ENCODE measurements at regions of chr7 and their contacts with region 1.

Region 1: DNA sequence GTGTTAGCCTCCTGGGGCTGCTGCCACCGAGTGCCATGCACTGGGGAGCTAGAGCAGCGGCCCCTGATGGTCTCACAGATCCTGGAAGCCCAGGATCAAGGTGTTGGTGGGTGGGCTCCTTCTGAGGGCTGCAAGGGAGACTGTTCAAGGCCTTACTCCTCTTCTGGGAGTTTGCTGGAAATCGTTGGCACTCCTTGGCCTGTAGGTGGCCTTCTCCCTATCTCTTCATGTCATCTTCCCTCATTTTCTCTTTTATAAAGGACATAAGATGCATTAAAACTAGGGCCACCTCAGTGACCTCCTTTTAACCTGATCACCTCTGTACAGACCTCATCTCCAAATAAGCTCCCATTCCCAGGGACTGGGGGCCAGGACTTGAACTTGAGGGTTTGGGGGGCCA is 27.0 kb upstream of the ZNF862 start:
- DNase-seq: no peak
- H3K4me3 ChIP-seq: no peak overlapping the region
- H3K27ac ChIP-seq: no peak overlapping the region
- H3K4me1 ChIP-seq: peaks cover 0 to 17% (median 5%) of the 10 kb centered on the region in 4 experiments; a peak in 6 of 7 replicates
- H3K27me3 ChIP-seq: no peaks in the 10 kb centered on the region
- CTCF ChIP-seq: peak in 2 of 3 experiments; percentile 25 to 51; a peak in 2 of 4 replicates
- EP300 ChIP-seq: no peak
- POLR2A ChIP-seq: no peak
- RAD21 ChIP-seq: no peak; a peak in 2 of 4 replicates

Region 2: GRCh38 chr7:149799397-149800171 is 11.6 kb before region 1 on chr7:
- CTCF ChIA-PET with region 1: interaction called, 55 read pairs
- POLR2A ChIA-PET with region 1: interaction called, 5 read pairs
- DNase-seq: peak in 1 of 2 experiments; percentile 91
- H3K4me3 ChIP-seq: no peak overlapping the region
- H3K27ac ChIP-seq: no peak overlapping the region
- H3K4me1 ChIP-seq: peaks cover 0 to 7% (median 5%) of the 10 kb centered on the region in 4 experiments; a peak in 6 of 7 replicates
- H3K27me3 ChIP-seq: no peaks in the 10 kb centered on the region
- CTCF ChIP-seq: peak in 2 of 3 experiments; percentile 73 to 89; a peak in 3 of 4 replicates
- EP300 ChIP-seq: no peak
- POLR2A ChIP-seq: no peak
- RAD21 ChIP-seq: peak; percentile 67 to 80

Region 3: GRCh38 chr7:149826872-149827714 is 15.9 kb after region 1 on chr7:
- CTCF ChIA-PET with region 1: interaction called, 25 read pairs
- POLR2A ChIA-PET with region 1: interaction called, 4 read pairs
- DNase-seq: no peak
- H3K4me3 ChIP-seq: no peak overlapping the region
- H3K27ac ChIP-seq: no peak overlapping the region
- H3K4me1 ChIP-seq: peaks cover 0 to 10% (median 6%) of the 10 kb centered on the region in 4 experiments; a peak in 5 of 7 replicates
- H3K27me3 ChIP-seq: no peaks in the 10 kb centered on the region
- CTCF ChIP-seq: no peak
- EP300 ChIP-seq: no peak
- POLR2A ChIP-seq: no peak
- RAD21 ChIP-seq: no peak

Region 4: GRCh38 chr7:149838224-149838947 is 27.2 kb after region 1 on chr7 and contains the start of gene ZNF862:
- CTCF ChIA-PET with region 1: interaction called, 15 read pairs
- POLR2A ChIA-PET with region 1: interaction called, 3 read pairs
- DNase-seq: peak; percentile 93 to 96
- H3K4me3 ChIP-seq: peak within 1 kb of the TSS; percentile 61 to 91 (median 82)
- H3K27ac ChIP-seq: peak within 1 kb of the TSS; percentile 18; the same call in 1 of the 2 replicates
- H3K4me1 ChIP-seq: peaks cover 0 to 6% (median 0%) of the 10 kb centered on the region in 4 experiments; a peak in 3 of 7 replicates
- H3K27me3 ChIP-seq: no peaks in the 10 kb centered on the region; a peak in 2 of 7 replicates
- CTCF ChIP-seq: no peak
- EP300 ChIP-seq: no peak
- POLR2A ChIP-seq: peak in 1 of 2 experiments; percentile 54; a peak in 1 of 3 replicates
- RAD21 ChIP-seq: no peak
- total RNA-seq, gene ZNF862: 2.5 and 3.9 TPM in 2 replicates

Region 5: DNA sequence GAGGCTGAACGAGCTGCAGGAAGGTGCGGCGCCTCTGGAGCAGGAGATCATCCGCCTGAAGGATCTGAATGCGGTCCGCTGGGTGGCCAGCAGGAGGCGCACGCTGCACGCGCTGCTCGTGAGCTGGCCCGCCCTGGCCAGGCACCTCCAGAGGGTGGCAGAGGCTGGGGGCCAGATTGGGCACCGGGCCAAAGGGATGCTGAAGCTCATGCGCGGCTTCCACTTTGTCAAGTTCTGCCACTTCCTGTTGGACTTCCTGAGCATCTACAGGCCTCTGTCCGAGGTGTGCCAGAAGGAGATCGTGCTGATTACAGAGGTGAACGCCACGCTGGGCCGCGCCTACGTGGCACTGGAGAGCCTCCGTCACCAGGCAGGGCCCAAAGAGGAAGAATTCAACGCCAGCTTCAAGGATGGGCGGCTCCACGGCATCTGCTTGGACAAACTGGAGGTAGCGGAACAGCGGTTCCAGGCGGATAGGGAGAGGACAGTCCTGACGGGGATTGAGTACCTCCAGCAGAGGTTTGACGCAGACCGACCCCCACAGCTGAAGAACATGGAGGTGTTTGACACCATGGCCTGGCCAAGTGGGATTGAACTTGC is 50.3 kb after region 1 on chr7:
- CTCF ChIA-PET with region 1: interaction called, 209 read pairs
- POLR2A ChIA-PET with region 1: no interaction called
- DNase-seq: peak in 1 of 2 experiments; percentile 89
- H3K4me3 ChIP-seq: no peak overlapping the region
- H3K27ac ChIP-seq: no peak overlapping the region
- H3K4me1 ChIP-seq: no peaks in the 10 kb centered on the region
- H3K27me3 ChIP-seq: no peaks in the 10 kb centered on the region; a peak in 2 of 7 replicates
- CTCF ChIP-seq: peak; percentile 98 to 100 (median 99)
- EP300 ChIP-seq: no peak
- POLR2A ChIP-seq: no peak
- RAD21 ChIP-seq: peak; percentile 87 to 94

Measured in H1 (cell line).